ENCODE measurements at regions of chr2 and their contacts with region 1.

Region 1: GRCh38 chr2:68925295-68925896 is 27.3 kb downstream of the GKN2 start:
- DNase-seq: peak in 1 of 4 donors; percentile 44
- ATAC-seq: peak; percentile 92
- H3K4me3 ChIP-seq: no peak overlapping the region
- H3K27ac ChIP-seq: no peak overlapping the region
- H3K4me1 ChIP-seq: no peaks in the 10 kb centered on the region
- H3K27me3 ChIP-seq: no peaks in the 10 kb centered on the region
- CTCF ChIP-seq: peak; percentile 84 to 85

Region 2: GRCh38 chr2:68487773-68488355 is 437.5 kb before region 1 on chr2:
- intact Hi-C with region 1: loop called in 1 of 2 experiments (anchors 10 kb)
- DNase-seq: peak in 1 of 4 donors; percentile 17
- ATAC-seq: peak; percentile 79
- H3K4me3 ChIP-seq: no peak overlapping the region
- H3K27ac ChIP-seq: no peak overlapping the region
- H3K4me1 ChIP-seq: no peaks in the 10 kb centered on the region
- H3K27me3 ChIP-seq: no peaks in the 10 kb centered on the region
- CTCF ChIP-seq: peak; percentile 48 to 53

Region 3: DNA sequence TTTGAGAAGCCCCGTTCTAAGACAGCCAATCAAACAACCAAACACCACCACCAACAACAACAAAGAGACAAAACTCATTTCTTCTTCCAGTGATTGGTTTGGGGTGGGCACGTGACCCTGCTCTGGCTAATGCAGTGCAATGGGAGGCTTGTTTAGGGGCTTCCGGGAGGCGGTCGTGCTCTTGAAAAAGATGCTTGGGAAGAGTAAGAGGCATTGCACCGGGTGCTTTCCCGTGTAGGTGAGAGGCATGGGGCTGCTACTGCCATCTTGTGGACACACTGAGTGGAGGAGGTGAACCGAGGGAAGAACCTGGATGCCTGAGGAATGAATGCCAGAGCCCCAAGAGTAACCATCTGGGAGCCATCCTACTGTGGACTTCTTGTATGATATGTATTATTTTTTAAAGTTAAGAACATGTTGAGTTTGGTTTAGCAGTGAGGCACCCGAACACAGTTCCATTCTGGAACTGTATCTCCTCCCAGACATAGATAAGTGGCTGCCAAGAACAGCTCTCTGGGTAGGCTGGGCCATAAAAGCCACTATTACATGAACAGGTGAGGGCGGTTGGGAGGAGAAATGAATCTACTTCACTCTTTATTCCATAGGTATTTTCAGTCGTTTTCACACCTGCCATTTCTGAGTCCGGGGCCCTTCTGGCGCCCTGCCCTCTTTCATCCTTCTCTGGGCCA is 209.9 kb before region 1 on chr2:
- intact Hi-C with region 1: loop called in 1 of 2 experiments (anchors 10 kb)
- DNase-seq: peak in 2 of 4 donors; percentile 45 to 50
- ATAC-seq: peak; percentile 93
- H3K4me3 ChIP-seq: no peak overlapping the region
- H3K27ac ChIP-seq: peak overlapping the region; percentile 44 to 84
- H3K4me1 ChIP-seq: peaks cover 0 to 11% of the 10 kb centered on the region in 2 donors
- H3K27me3 ChIP-seq: no peaks in the 10 kb centered on the region
- CTCF ChIP-seq: peak; percentile 58 to 60

Region 4: GRCh38 chr2:69386789-69387734 is 461.7 kb after region 1 on chr2 and contains the start of gene GFPT1:
- intact Hi-C with region 1: no loop called
- DNase-seq: peak; percentile 94 to 99 (median 96)
- ATAC-seq: peak; percentile 98
- H3K4me3 ChIP-seq: peak within 1 kb of the TSS; percentile 80 to 90
- H3K27ac ChIP-seq: peak within 1 kb of the TSS; percentile 88
- H3K4me1 ChIP-seq: peaks cover 0 to 59% of the 10 kb centered on the region in 2 donors
- H3K27me3 ChIP-seq: no peaks in the 10 kb centered on the region
- CTCF ChIP-seq: no peak
- polyA plus RNA-seq, gene GFPT1: 26.3 to 38.8 (median 29.8) TPM

Measured in left lung (tissue), 14 donors.